Thyroid gland (tissue), 4 donors: ENCODE measurements at regions of chr18 and their contacts with region 1.

Region 1: GRCh38 chr18:31741097-31741735 is 19.5 kb downstream of the SLC25A52 start:
- DNase-seq: peak; percentile 42 to 51
- H3K4me3 ChIP-seq: no peak overlapping the region
- H3K27ac ChIP-seq: no peak overlapping the region
- H3K4me1 ChIP-seq: no peaks in the 10 kb centered on the region
- H3K27me3 ChIP-seq: no peaks in the 10 kb centered on the region
- CTCF ChIP-seq: peak; percentile 69 to 92 (median 79)
- POLR2A ChIP-seq: no peak

Region 2: DNA sequence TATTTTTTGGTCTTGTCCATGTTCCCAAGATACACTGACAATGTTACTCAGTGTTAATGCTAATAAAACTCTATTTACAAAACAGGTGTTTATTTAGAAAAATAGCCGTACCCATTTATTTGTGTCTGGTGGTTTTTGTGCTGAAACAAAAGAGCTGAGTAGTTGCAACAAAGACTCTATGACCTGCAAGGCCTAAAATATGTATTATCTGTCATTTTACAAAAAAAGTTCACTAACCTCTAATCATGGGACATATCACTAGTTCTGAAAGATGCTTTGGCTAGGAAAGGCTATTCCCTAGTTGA is 78.7 kb after region 1 on chr18:
- intact Hi-C with region 1: loop called (anchors 5 kb)
- DNase-seq: no peak
- H3K4me3 ChIP-seq: no peak overlapping the region
- H3K27ac ChIP-seq: no peak overlapping the region
- H3K4me1 ChIP-seq: no peaks in the 10 kb centered on the region
- H3K27me3 ChIP-seq: no peaks in the 10 kb centered on the region
- CTCF ChIP-seq: no peak
- POLR2A ChIP-seq: no peak

Region 3: GRCh38 chr18:31892936-31893335 is 151.7 kb after region 1 on chr18:
- intact Hi-C with region 1: no loop called
- DNase-seq: no peak
- H3K4me3 ChIP-seq: no peak overlapping the region
- H3K27ac ChIP-seq: no peak overlapping the region
- H3K4me1 ChIP-seq: no peaks in the 10 kb centered on the region
- H3K27me3 ChIP-seq: no peaks in the 10 kb centered on the region
- CTCF ChIP-seq: no peak
- POLR2A ChIP-seq: no peak

Region 4: GRCh38 chr18:31977270-31977872 is 236.2 kb after region 1 on chr18:
- intact Hi-C with region 1: loop called (anchors 5 kb)
- DNase-seq: peak; percentile 19 to 47
- H3K4me3 ChIP-seq: no peak overlapping the region
- H3K27ac ChIP-seq: no peak overlapping the region
- H3K4me1 ChIP-seq: no peaks in the 10 kb centered on the region
- H3K27me3 ChIP-seq: no peaks in the 10 kb centered on the region
- CTCF ChIP-seq: peak; percentile 40 to 80 (median 73)
- POLR2A ChIP-seq: no peak